Activated CD8-positive, alpha-beta memory T cell treated with anti-CD3 and anti-CD28 coated beads, Interleukin-2, amount 10 ng/mL, durations not matched to agents 7 days and 5 days (primary cell): ENCODE measurements at regions of chr10 and their contacts with region 1.

Region 1: GRCh38 chr10:89701238-89702120 is at the start of gene KIF20B:
- DNase-seq: peak; percentile 98
- ATAC-seq: peak; percentile 97
- H3K4me3 Mint-ChIP-seq: peak within 1 kb of the TSS; percentile 96
- H3K27ac Mint-ChIP-seq: peak within 1 kb of the TSS; percentile 98
- H3K4me1 Mint-ChIP-seq: peaks cover 50% of the 10 kb centered on the region
- H3K27me3 Mint-ChIP-seq: no peaks in the 10 kb centered on the region
- total RNA-seq, gene KIF20B: 87.5 to 92.8 TPM

Region 2: DNA sequence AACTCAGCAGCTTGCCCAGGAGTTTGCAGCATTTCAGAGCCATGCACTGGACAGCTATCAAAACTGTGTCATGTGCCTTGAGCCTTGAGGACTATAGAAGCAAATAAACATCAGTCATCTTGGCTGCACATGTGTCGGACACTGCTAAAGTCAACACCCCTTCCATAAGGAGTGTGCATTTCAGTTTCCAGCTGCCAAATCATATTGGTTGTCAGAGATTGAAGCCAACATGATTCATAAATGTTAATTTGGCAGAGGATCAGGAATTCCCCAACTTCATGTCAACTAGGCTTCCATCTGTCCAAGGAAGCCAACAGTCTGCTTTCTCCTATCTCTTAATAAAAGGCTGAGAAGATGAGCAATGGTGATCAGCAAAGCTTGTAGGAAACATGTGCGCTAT is 198.9 kb before region 1 on chr10:
- CTCF ChIA-PET with region 1: no interaction called
- DNase-seq: no peak
- ATAC-seq: no peak
- H3K4me3 Mint-ChIP-seq: no peak overlapping the region
- H3K27ac Mint-ChIP-seq: no peak overlapping the region
- H3K4me1 Mint-ChIP-seq: peaks cover 9% of the 10 kb centered on the region
- H3K27me3 Mint-ChIP-seq: peaks cover 28% of the 10 kb centered on the region

Region 3: DNA sequence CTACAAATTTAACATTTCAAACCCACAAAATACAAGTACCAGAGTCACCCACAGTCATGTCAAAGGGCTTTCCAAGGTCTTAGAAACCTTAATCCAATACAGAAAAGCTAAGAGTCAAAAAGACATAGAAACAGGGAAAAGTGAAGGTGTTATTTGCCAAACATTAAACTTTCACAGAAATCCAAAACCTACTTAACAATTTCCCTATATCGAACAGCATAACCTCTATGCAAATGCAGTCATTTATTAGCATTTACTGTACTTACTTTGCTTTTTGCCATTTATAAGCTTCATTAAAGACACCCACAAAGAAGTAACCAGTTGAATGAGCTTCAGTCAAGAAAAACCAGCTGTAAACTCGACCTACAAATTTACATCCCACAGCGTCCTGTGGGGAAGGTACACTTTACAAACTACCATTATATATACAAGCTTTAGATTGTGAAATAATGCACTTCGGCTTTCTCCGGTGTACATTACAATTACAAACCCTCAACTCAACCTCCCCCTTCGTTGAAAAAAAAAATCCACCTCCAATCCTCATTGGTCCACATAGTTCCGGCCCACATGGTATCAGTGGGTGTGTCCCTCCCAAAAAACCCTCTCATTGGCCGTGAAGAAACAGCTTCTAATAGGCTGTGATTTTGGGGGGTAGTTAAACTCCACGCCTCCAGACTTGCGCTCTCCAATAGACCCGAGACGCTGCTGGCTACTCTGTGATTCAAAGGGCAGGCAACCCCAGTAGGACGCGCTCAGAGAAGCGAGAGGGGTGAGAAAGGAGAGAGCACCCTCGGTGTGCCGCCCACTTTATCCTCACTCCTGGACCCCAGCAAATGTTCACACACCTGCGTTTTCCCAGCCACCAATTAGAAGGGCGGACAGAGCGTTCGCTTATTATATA is 57.8 kb before region 1 on chr10:
- CTCF ChIA-PET with region 1: interaction called, 12 read pairs
- DNase-seq: peak; percentile 90
- ATAC-seq: peak; percentile 89
- H3K4me3 Mint-ChIP-seq: no peak overlapping the region
- H3K27ac Mint-ChIP-seq: peak overlapping the region; percentile 52
- H3K4me1 Mint-ChIP-seq: peaks cover 13% of the 10 kb centered on the region
- H3K27me3 Mint-ChIP-seq: peaks cover 23% of the 10 kb centered on the region

Region 4: GRCh38 chr10:89684604-89685003 is 16.9 kb before region 1 on chr10:
- CTCF ChIA-PET with region 1: no interaction called
- DNase-seq: no peak
- ATAC-seq: no peak
- H3K4me3 Mint-ChIP-seq: no peak overlapping the region
- H3K27ac Mint-ChIP-seq: no peak overlapping the region
- H3K4me1 Mint-ChIP-seq: peaks cover 3% of the 10 kb centered on the region
- H3K27me3 Mint-ChIP-seq: peaks cover 41% of the 10 kb centered on the region

Region 5: GRCh38 chr10:89805599-89806013 is 104.1 kb after region 1 on chr10:
- CTCF ChIA-PET with region 1: no interaction called
- DNase-seq: peak; percentile 54
- ATAC-seq: peak; percentile 89
- H3K4me3 Mint-ChIP-seq: no peak overlapping the region
- H3K27ac Mint-ChIP-seq: no peak overlapping the region
- H3K4me1 Mint-ChIP-seq: peaks cover 15% of the 10 kb centered on the region
- H3K27me3 Mint-ChIP-seq: peaks cover 24% of the 10 kb centered on the region